ENCODE measurements at regions of chr2 and their contacts with region 1.

Region 1: DNA sequence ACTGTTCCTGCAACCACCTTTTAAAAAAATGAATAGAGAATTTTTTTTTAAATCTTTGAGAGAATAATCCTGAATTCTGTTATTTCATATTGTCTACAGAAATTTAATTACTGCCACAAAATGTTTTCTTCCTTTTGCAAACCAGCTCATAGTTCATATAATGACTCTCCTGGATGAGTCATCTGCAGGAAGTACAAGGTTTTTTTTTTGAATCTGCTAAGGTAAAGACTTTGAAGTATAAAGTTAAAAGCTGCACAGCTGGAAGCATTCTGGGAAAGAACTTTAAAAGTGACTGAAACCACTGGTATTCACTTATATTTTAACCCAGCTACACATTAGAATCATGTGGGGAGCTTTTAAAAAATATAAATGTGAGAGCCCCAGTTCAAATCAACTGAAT is 25.4 kb downstream of the SESTD1 start:
- DNase-seq: peak; percentile 62
- H3K4me3 ChIP-seq: no peak overlapping the region
- H3K27ac ChIP-seq: no peak overlapping the region
- H3K4me1 ChIP-seq: peaks cover 44% of the 10 kb centered on the region
- H3K27me3 ChIP-seq: no peaks in the 10 kb centered on the region

Region 2: DNA sequence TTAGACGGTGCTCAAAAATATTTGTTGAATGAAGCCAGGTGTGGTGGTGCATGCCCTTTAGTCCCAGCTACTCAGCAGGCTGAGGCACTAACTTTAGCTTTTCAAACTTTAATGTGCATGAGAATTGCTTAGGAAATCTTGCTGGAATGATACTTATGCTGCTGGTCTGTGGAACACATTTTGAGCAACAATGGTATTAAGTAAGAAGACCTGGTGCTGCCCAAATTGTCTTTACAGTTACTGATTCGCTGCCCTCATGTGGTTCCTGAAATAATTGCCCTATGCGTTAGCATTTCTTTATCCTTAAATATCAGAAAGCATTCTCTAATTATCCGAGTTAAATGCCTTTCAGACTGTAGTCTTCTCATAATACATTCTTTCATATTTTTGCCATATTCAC is 101.5 kb after region 1 on chr2:
- in situ Hi-C with region 1: loop called (anchors 25 kb)
- DNase-seq: peak; percentile 65
- H3K4me3 ChIP-seq: no peak overlapping the region
- H3K27ac ChIP-seq: no peak overlapping the region
- H3K4me1 ChIP-seq: peaks cover 33% of the 10 kb centered on the region
- H3K27me3 ChIP-seq: no peaks in the 10 kb centered on the region

Region 3: DNA sequence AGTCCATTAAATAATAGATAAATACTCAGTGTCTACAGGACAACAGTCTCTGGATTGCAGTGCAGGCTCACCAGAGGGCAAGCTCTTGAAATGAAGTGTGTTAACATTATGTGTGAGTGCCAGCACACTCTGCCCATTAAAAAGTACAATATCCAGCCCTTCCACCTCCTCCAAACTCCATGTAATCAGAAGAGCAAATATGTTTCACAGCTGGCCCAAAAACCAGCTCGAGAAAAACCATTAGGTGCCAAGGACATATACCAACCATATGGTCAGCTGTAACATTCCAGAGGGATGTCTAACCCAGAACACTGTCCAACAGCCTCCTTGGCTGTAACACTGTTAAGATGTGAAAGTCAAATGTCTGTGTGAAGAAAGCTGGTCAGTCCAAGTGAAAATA is 510.0 kb after region 1 on chr2:
- in situ Hi-C with region 1: loop called (anchors 25 kb)
- DNase-seq: peak; percentile 74
- H3K4me3 ChIP-seq: no peak overlapping the region
- H3K27ac ChIP-seq: no peak overlapping the region
- H3K4me1 ChIP-seq: peaks cover 9% of the 10 kb centered on the region
- H3K27me3 ChIP-seq: no peaks in the 10 kb centered on the region